A673 (cell line): ENCODE measurements at regions of chr19 and their contacts with region 1.

Region 1: DNA sequence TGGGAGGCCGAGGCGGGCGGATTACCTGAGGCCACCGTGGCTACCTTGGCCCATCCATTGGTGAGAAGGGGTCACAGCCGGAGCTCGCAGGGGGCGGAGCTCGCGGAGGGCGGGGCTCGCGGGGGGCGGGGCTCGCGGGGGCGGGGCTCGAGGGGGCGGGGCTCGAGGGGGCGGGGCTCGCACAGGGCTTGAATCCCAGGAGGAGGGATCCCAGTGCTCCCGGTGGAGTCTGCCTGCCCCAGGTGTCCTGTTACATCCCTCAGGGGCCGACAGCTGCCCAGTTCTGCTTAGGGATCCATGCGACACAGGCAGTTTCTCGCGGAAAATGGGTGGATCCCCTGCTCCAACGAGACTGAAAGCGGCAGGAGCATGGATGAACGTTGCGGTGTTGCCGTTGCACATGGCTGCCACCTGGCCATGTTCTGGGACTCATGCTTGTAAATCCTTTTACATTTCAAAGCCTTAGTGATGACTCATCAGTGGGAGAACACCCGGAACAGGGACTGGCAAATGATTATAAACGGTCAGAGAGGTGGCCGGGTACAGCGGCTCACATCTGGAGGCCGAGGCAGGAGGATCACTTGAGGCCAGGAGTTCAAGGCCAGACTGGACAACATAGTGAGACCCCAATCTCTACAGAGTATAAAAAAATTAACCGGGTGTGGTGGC is 25.1 kb downstream of the TMPRSS9 start:
- DNase-seq: peak; percentile 83
- H3K4me3 ChIP-seq: peak overlapping the region; percentile 14
- H3K27ac ChIP-seq: no peak overlapping the region
- H3K4me1 ChIP-seq: peaks cover 7% of the 10 kb centered on the region
- H3K27me3 ChIP-seq: no peaks in the 10 kb centered on the region
- CTCF ChIP-seq: no peak

Region 2: GRCh38 chr19:1680976-1681375 is 704.2 kb before region 1 on chr19:
- CTCF ChIA-PET with region 1: no interaction called
- POLR2A ChIA-PET with region 1: no interaction called
- intact Hi-C with region 1: no loop called
- DNase-seq: no peak
- H3K4me3 ChIP-seq: no peak overlapping the region
- H3K27ac ChIP-seq: no peak overlapping the region
- H3K4me1 ChIP-seq: peaks cover 2% of the 10 kb centered on the region
- H3K27me3 ChIP-seq: peaks cover 19% of the 10 kb centered on the region
- CTCF ChIP-seq: no peak

Region 3: DNA sequence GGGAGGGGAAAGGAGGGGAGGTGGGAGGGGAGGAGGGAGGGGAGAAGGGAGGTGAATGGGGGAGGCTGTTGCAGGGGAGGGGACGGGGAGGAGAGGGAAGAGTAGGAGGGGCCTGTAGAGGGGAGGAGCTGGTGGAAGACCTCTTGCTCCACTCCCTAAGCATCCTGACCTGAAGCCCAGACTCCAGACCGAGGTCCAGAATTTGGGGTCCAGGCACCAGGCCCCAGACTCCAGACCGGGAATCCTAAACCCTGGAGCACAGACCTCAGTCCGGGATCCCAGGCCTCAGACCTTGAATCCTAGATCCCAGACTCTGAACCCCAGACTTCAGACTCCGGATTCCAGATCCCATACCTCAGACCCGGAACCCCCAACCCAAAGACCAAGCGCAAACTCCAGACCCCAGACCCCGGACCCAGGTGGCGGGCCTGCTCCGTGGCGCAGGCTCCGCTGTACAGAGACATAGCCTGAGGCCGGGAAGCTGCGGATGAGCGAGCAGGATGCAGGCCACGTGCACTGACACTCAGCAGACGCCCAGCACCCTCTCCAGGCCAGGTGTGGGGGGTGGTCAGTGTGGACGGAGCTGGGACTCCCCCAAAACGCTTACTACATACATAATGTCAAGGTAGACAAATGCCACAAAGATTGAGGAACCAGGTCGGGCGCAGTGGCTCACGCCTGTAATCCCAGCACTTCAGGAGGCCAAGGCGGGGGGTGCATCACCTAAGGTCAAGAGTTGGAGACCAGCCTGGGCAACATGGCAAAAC is 369.0 kb before region 1 on chr19:
- CTCF ChIA-PET with region 1: no interaction called
- POLR2A ChIA-PET with region 1: interaction called, 19 read pairs
- intact Hi-C with region 1: no loop called
- DNase-seq: peak; percentile 85
- H3K4me3 ChIP-seq: peak overlapping the region; percentile 36
- H3K27ac ChIP-seq: peak overlapping the region; percentile 40
- H3K4me1 ChIP-seq: no peaks in the 10 kb centered on the region
- H3K27me3 ChIP-seq: no peaks in the 10 kb centered on the region
- CTCF ChIP-seq: no peak

Region 4: GRCh38 chr19:2253106-2254053 is 131.8 kb before region 1 on chr19:
- CTCF ChIA-PET with region 1: no interaction called
- POLR2A ChIA-PET with region 1: no interaction called
- intact Hi-C with region 1: no loop called
- DNase-seq: no peak
- H3K4me3 ChIP-seq: no peak overlapping the region
- H3K27ac ChIP-seq: no peak overlapping the region
- H3K4me1 ChIP-seq: no peaks in the 10 kb centered on the region
- H3K27me3 ChIP-seq: no peaks in the 10 kb centered on the region
- CTCF ChIP-seq: peak; percentile 48

Region 5: GRCh38 chr19:2317756-2318155 is 67.4 kb before region 1 on chr19:
- CTCF ChIA-PET with region 1: no interaction called
- POLR2A ChIA-PET with region 1: no interaction called
- intact Hi-C with region 1: no loop called
- DNase-seq: no peak
- H3K4me3 ChIP-seq: no peak overlapping the region
- H3K27ac ChIP-seq: no peak overlapping the region
- H3K4me1 ChIP-seq: no peaks in the 10 kb centered on the region
- H3K27me3 ChIP-seq: no peaks in the 10 kb centered on the region
- CTCF ChIP-seq: no peak

Region 6: GRCh38 chr19:2328401-2329148 is 56.6 kb before region 1 on chr19 and contains the starts of genes LSM7 and SPPL2B:
- CTCF ChIA-PET with region 1: interaction called, 3 read pairs
- POLR2A ChIA-PET with region 1: interaction called, 5 read pairs
- intact Hi-C with region 1: loop called (anchors 5 kb)
- DNase-seq: peak; percentile 94
- H3K4me3 ChIP-seq: peak within 1 kb of the TSS; percentile 99
- H3K27ac ChIP-seq: peak within 1 kb of the TSS; percentile 85
- H3K4me1 ChIP-seq: peaks cover 29% of the 10 kb centered on the region
- H3K27me3 ChIP-seq: no peaks in the 10 kb centered on the region
- CTCF ChIP-seq: no peak
- total RNA-seq, gene LSM7: 137 and 152 TPM in 2 replicates
- total RNA-seq, gene SPPL2B: 86.8 and 94.2 TPM in 2 replicates

Region 7: GRCh38 chr19:3479177-3479833 is 1094.1 kb after region 1 on chr19:
- CTCF ChIA-PET with region 1: no interaction called
- POLR2A ChIA-PET with region 1: no interaction called
- intact Hi-C with region 1: no loop called
- DNase-seq: peak; percentile 68
- H3K4me3 ChIP-seq: no peak overlapping the region
- H3K27ac ChIP-seq: no peak overlapping the region
- H3K4me1 ChIP-seq: no peaks in the 10 kb centered on the region
- H3K27me3 ChIP-seq: peaks cover 34% of the 10 kb centered on the region
- CTCF ChIP-seq: no peak